A673 (cell line): ENCODE measurements at regions of chr4 and their contacts with region 1.

Region 1: GRCh38 chr4:742742-743311 is 37.2 kb downstream of the PCGF3 start:
- DNase-seq: peak; percentile 85
- H3K4me3 ChIP-seq: no peak overlapping the region
- H3K27ac ChIP-seq: no peak overlapping the region
- H3K4me1 ChIP-seq: peaks cover 5% of the 10 kb centered on the region
- H3K27me3 ChIP-seq: no peaks in the 10 kb centered on the region
- CTCF ChIP-seq: peak; percentile 93

Region 2: GRCh38 chr4:986879-987623 is 244.2 kb after region 1 on chr4 and contains the start of gene IDUA:
- CTCF ChIA-PET with region 1: no interaction called
- POLR2A ChIA-PET with region 1: no interaction called
- intact Hi-C with region 1: loop called (anchors 10 kb)
- DNase-seq: peak; percentile 79
- H3K4me3 ChIP-seq: peak within 1 kb of the TSS; percentile 60
- H3K27ac ChIP-seq: peak within 1 kb of the TSS; percentile 59
- H3K4me1 ChIP-seq: peaks cover 8% of the 10 kb centered on the region
- H3K27me3 ChIP-seq: no peaks in the 10 kb centered on the region
- CTCF ChIP-seq: peak; percentile 65
- total RNA-seq, gene IDUA: 12.0 and 12.3 TPM in 2 replicates